CD8-positive, alpha-beta T cell (primary cell): ENCODE measurements at regions of chr5 and their contacts with region 1.

Region 1: GRCh38 chr5:5492087-5492933 is 69.8 kb downstream of the ICE1 start:
- DNase-seq: peak in 7 of 9 experiments; percentile 4 to 78 (median 38)
- ATAC-seq: peak; percentile 35
- H3K4me3 ChIP-seq: no peak overlapping the region
- H3K4me3 Mint-ChIP-seq: peak overlapping the region; percentile 66
- H3K27ac ChIP-seq: no peak overlapping the region
- H3K27ac Mint-ChIP-seq: no peak overlapping the region
- H3K4me1 ChIP-seq: peaks cover 17% of the 10 kb centered on the region
- H3K4me1 Mint-ChIP-seq: peaks cover 21% of the 10 kb centered on the region
- H3K27me3 ChIP-seq: no peaks in the 10 kb centered on the region
- H3K27me3 Mint-ChIP-seq: no peaks in the 10 kb centered on the region
- CTCF ChIP-seq: peak; percentile 81

Region 2: DNA sequence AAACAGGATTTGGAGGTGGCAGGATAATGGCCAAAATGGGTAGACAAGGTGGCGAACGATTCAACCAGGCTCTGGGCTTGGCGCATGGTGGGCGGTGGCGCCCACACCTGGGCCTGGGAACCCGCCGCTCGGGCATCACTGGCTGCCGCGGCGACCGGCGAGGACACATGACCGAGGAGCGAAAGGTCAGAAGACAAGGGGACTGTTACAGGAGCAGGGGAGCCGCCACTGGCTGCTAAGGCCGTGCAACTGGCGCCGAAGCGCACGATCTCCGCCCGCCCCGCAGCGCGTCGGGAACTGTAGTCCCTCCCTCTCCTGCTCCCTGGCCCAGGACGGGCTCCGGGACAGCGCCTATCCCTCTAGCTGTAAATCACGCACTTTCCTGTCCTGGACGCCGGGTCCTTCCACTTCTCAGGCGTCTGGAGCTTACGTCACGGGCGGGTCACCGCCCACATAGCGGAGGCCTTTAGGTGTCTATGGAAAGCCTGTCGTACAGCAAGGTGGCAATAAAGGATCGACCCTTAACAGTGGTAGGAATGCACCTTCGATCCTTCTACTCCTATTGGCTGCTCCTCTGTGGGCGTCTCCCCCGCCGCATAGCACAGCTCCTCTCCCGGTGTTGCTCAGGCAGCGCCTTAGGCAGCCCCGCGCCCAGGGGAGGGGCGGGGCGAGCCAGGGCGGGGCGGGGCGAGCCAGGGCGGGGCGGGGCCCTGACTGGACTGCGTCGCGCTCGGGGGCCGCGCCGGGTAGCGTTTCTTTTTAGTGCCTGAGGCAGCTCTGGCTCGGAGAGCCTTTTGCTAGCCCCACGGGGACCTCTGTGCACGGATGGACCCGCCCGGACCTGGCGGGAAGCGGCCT is 70.1 kb before region 1 on chr5 and contains the start of gene ICE1:
- CTCF ChIA-PET with region 1: interaction called, 3 read pairs
- POLR2A ChIA-PET with region 1: interaction called, 4 read pairs
- intact Hi-C with region 1: loop called (anchors 1 kb)
- DNase-seq: peak; percentile 91 to 98 (median 94)
- ATAC-seq: peak; percentile 87
- H3K4me3 ChIP-seq: peak within 1 kb of the TSS; percentile 78 to 84
- H3K4me3 Mint-ChIP-seq: no peak within 1 kb of the TSS
- H3K27ac ChIP-seq: peak within 1 kb of the TSS; percentile 96 to 99
- H3K27ac Mint-ChIP-seq: peak within 1 kb of the TSS; percentile 99
- H3K4me1 ChIP-seq: peaks cover 42% of the 10 kb centered on the region
- H3K4me1 Mint-ChIP-seq: peaks cover 18% of the 10 kb centered on the region
- H3K27me3 ChIP-seq: no peaks in the 10 kb centered on the region
- H3K27me3 Mint-ChIP-seq: no peaks in the 10 kb centered on the region
- CTCF ChIP-seq: no peak
- total RNA-seq, gene ICE1: 48.3 to 52.8 TPM

Region 3: GRCh38 chr5:5533927-5534326 is 41.6 kb after region 1 on chr5:
- CTCF ChIA-PET with region 1: no interaction called
- POLR2A ChIA-PET with region 1: no interaction called
- intact Hi-C with region 1: no loop called
- DNase-seq: no peak
- ATAC-seq: no peak
- H3K4me3 ChIP-seq: no peak overlapping the region
- H3K4me3 Mint-ChIP-seq: no peak overlapping the region
- H3K27ac ChIP-seq: no peak overlapping the region
- H3K27ac Mint-ChIP-seq: no peak overlapping the region
- H3K4me1 ChIP-seq: no peaks in the 10 kb centered on the region
- H3K4me1 Mint-ChIP-seq: no peaks in the 10 kb centered on the region
- H3K27me3 ChIP-seq: no peaks in the 10 kb centered on the region
- H3K27me3 Mint-ChIP-seq: peaks cover 19% of the 10 kb centered on the region
- CTCF ChIP-seq: no peak

Region 4: DNA sequence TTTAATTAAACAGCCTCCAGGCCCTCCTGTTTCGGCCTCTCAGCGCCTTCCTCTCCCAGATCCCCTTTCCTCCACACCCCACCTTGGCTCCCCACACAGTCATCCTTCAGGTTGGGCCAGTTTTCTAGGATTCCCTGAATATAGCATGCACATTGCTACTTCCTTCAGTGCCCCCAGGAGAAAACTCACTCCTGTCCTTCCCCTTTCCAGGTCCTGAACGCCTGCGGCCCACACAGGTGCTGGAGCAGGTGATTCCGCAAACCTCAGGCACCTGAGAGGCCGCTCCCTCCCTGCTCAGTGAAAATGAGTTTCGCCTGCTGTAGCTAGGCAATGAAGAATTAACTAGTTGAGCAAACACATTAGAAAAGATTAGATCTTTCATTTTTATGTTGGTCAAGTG is 701.0 kb after region 1 on chr5:
- CTCF ChIA-PET with region 1: no interaction called
- POLR2A ChIA-PET with region 1: no interaction called
- intact Hi-C with region 1: loop called in 1 of 2 experiments (anchors 10 kb)
- DNase-seq: no peak
- ATAC-seq: no peak
- H3K4me3 ChIP-seq: no peak overlapping the region
- H3K4me3 Mint-ChIP-seq: no peak overlapping the region
- H3K27ac ChIP-seq: no peak overlapping the region
- H3K27ac Mint-ChIP-seq: no peak overlapping the region
- H3K4me1 ChIP-seq: no peaks in the 10 kb centered on the region
- H3K4me1 Mint-ChIP-seq: no peaks in the 10 kb centered on the region
- H3K27me3 ChIP-seq: no peaks in the 10 kb centered on the region
- H3K27me3 Mint-ChIP-seq: peaks cover 1% of the 10 kb centered on the region
- CTCF ChIP-seq: no peak

Region 5: GRCh38 chr5:6576861-6577501 is 1084.7 kb after region 1 on chr5:
- CTCF ChIA-PET with region 1: no interaction called
- POLR2A ChIA-PET with region 1: no interaction called
- intact Hi-C with region 1: loop called (anchors 2 to 10 kb)
- DNase-seq: peak in 3 of 9 experiments; percentile 16 to 38 (median 24)
- ATAC-seq: no peak
- H3K4me3 ChIP-seq: no peak overlapping the region
- H3K4me3 Mint-ChIP-seq: no peak overlapping the region
- H3K27ac ChIP-seq: no peak overlapping the region
- H3K27ac Mint-ChIP-seq: no peak overlapping the region
- H3K4me1 ChIP-seq: no peaks in the 10 kb centered on the region
- H3K4me1 Mint-ChIP-seq: no peaks in the 10 kb centered on the region
- H3K27me3 ChIP-seq: peaks cover 0 to under 1% of the 10 kb centered on the region in 2 experiments
- H3K27me3 Mint-ChIP-seq: peaks cover 24% of the 10 kb centered on the region
- CTCF ChIP-seq: no peak

Region 6: DNA sequence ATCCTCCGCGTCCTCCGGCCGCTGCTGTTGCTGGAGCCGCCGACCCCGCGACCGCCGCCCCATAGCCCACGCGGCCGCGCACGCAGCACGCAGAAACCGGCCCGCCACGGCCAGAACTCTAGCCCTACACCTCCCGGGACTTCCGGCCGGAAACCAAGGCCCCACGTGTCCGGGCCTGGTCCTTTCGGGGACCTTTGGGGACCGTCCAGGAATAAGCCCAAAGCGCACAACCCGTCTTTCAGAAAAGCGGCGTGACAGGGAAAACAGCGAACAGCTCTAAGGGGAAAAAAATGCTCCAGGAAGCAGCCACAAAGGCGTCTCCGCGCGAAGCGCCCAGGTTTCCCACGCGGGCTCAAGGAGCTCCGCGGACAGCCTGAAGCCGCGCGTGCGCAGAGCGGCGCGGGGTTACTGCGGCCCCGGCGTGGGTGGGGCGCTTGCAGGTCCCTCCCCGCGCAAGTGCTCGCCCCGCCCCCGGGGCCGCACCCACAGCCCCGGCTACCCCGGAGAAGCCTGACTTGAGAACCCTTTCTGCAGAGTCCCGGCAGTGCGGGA is 1140.7 kb after region 1 on chr5 and contains the starts of genes NSUN2 and SRD5A1:
- CTCF ChIA-PET with region 1: no interaction called
- POLR2A ChIA-PET with region 1: no interaction called
- intact Hi-C with region 1: loop called (anchors 5 kb)
- DNase-seq: peak; percentile 81 to 98 (median 90)
- ATAC-seq: peak; percentile 89
- H3K4me3 ChIP-seq: peak within 1 kb of the TSS; percentile 75 to 83
- H3K4me3 Mint-ChIP-seq: peak within 1 kb of the TSS; percentile 85
- H3K27ac ChIP-seq: peak within 1 kb of the TSS; percentile 92 to 100
- H3K27ac Mint-ChIP-seq: peak within 1 kb of the TSS; percentile 99
- H3K4me1 ChIP-seq: peaks cover 22% of the 10 kb centered on the region
- H3K4me1 Mint-ChIP-seq: peaks cover 52% of the 10 kb centered on the region
- H3K27me3 ChIP-seq: no peaks in the 10 kb centered on the region
- H3K27me3 Mint-ChIP-seq: no peaks in the 10 kb centered on the region
- CTCF ChIP-seq: no peak
- total RNA-seq, gene NSUN2: 69.6 to 74.3 TPM
- total RNA-seq, gene SRD5A1: 2.1 to 2.8 TPM